ENCODE measurements at regions of chr16 and their contacts with region 1.

Region 1: GRCh38 chr16:11255737-11256660 is at the start of gene SOCS1:
- DNase-seq: peak; percentile 90
- H3K4me3 Mint-ChIP-seq: peak within 1 kb of the TSS; percentile 99
- H3K27ac Mint-ChIP-seq: peak within 1 kb of the TSS; percentile 97
- H3K4me1 Mint-ChIP-seq: peaks cover 38% of the 10 kb centered on the region
- H3K27me3 Mint-ChIP-seq: no peaks in the 10 kb centered on the region
- total RNA-seq, gene SOCS1: 217 and 219 TPM in 2 replicates

Region 2: DNA sequence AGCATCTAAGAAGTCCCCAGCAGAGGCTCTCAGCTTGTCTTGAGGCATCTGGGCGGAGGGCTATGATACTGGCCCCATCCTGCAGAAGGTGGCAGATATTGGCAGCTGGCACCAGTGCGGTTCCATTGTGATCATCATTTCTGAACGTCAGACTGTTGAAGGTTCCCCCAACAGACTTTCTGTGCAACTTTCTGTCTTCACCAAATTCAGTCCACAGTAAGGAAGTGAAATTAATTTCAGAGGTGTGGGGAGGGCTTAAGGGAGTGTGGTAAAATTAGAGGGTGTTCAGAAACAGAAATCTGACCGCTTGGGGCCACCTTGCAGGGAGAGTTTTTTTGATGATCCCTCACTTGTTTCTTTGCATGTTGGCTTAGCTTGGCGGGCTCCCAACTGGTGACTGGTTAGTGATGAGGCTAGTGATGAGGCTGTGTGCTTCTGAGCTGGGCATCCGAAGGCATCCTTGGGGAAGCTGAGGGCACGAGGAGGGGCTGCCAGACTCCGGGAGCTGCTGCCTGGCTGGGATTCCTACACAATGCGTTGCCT is 379.1 kb before region 1 on chr16 and contains the start of gene CIITA:
- intact Hi-C with region 1: loop called (anchors 10 kb)
- DNase-seq: peak; percentile 60
- H3K4me3 Mint-ChIP-seq: peak within 1 kb of the TSS; percentile 80
- H3K27ac Mint-ChIP-seq: peak within 1 kb of the TSS; percentile 75
- H3K4me1 Mint-ChIP-seq: peaks cover 75% of the 10 kb centered on the region
- H3K27me3 Mint-ChIP-seq: peaks cover 4% of the 10 kb centered on the region
- total RNA-seq, gene CIITA: 8.6 and 9.3 TPM in 2 replicates

Region 3: DNA sequence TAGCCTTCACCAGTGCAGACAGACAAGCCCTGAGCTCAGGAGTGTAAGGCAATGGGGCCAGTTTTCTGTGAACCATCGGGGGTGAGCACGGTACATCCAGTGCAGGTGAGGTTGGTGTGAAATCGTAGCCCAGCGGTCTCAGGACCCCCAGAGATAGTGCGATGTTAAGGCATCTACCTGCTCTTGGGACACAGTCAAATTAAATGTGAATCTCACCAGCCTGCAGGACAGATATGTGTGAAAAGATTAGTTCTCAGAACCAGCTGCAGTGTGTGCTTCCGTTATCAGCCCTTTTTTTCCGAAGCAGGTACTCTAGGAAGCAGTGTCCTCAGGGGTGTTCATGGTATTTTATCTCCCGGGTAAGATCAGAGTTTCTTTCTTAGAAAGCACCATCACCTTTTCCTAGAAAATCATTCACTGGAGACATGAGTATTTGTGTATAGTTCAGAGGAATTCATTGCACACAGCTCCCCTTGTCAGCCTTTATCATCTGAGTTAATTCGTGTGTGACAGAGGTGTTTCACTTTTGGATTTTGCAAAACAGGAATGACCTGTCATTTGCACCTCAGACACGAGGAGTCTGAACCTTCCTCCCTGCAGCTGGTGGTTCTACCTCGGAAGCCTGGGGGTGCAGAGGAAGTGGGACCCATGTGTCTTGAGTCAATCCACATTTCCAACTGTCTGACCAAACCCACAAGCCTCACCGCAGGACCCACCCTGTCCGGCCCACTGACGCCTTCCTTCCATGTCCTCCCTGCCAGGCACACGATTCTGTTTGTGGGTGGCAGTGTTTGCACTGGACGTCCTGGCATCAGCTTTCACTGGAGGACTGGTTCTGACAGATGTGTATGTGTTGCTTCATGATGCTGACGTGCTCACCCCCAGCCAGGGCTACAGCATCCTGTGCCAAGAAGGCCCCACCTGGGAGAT is 203.9 kb before region 1 on chr16:
- intact Hi-C with region 1: loop called (anchors 1 kb)
- DNase-seq: peak; percentile 83
- H3K4me3 Mint-ChIP-seq: peak overlapping the region; percentile 43
- H3K27ac Mint-ChIP-seq: peak overlapping the region; percentile 92
- H3K4me1 Mint-ChIP-seq: peaks cover 85% of the 10 kb centered on the region
- H3K27me3 Mint-ChIP-seq: no peaks in the 10 kb centered on the region

Region 4: DNA sequence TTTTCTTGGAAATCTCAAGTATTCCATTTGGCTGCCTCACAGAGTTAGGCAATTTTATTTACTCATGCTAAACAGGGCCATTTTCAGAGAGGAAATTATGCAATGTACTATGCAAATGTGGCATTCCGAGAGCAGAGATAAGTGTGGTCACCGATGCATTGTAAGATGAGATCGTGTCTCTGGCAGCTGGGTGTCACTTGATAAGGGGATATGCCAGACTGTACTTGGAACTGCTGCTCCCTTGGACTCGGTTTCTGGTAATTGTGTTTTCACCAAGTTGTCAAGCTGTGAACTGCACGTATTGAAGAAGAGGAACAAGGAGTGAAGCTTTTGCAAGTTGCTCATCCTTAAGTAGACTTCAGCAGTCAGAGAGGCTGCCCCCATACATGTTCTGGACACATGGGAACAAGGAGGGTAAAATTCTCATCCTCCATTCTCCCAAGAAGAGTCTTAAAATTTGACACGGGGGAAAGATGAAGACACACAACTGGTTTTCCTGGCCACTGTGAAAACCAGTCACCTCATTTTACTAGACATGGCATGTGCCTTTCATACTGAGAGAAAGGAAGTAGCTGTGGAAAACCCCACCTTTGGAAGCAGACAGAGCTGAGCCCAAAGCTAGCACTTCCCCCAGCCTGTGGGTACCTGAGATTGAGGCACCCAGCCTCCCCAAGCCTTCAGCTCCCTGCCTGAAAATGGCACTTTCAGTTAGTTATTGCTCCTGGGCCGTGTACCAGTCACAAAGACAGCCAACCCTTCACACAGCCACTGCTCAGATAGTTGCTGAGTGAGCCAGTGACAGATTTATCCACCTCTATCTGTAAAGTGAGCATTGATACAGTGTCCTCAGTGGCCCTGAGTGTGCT is 150.7 kb before region 1 on chr16:
- intact Hi-C with region 1: loop called (anchors 1 kb)
- DNase-seq: peak; percentile 51
- H3K4me3 Mint-ChIP-seq: peak overlapping the region; percentile 55
- H3K27ac Mint-ChIP-seq: peak overlapping the region; percentile 92
- H3K4me1 Mint-ChIP-seq: peaks cover 82% of the 10 kb centered on the region
- H3K27me3 Mint-ChIP-seq: no peaks in the 10 kb centered on the region

Region 5: DNA sequence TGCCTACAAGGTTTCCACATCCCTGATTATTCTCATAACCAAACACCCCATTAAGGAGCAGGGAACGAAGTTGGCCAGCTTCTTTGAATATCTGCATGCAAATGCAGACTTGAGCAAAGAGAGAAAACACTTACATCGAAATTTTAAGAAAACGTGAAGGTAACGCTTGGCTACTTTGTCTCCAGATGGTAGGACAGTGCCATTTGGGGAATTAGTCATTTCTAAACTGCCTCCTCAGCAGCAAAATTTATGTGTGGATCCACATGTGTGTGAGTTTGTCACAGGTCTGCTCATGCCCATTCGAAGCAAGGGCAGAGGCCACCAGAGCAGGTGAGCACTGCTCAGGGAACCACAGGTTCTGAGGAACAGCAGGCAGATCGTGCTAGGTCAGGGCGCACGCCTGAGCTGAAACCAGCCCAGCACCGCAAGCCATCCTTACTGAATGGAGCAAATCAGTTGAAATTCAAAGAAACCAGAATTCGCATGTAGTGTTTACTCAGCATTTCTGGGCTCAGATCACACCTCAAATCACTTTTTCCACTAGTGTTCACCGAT is 80.1 kb before region 1 on chr16:
- intact Hi-C with region 1: loop called (anchors 2 kb)
- DNase-seq: peak; percentile 35
- H3K4me3 Mint-ChIP-seq: no peak overlapping the region
- H3K27ac Mint-ChIP-seq: peak overlapping the region; percentile 83
- H3K4me1 Mint-ChIP-seq: peaks cover 79% of the 10 kb centered on the region
- H3K27me3 Mint-ChIP-seq: no peaks in the 10 kb centered on the region

Region 6: DNA sequence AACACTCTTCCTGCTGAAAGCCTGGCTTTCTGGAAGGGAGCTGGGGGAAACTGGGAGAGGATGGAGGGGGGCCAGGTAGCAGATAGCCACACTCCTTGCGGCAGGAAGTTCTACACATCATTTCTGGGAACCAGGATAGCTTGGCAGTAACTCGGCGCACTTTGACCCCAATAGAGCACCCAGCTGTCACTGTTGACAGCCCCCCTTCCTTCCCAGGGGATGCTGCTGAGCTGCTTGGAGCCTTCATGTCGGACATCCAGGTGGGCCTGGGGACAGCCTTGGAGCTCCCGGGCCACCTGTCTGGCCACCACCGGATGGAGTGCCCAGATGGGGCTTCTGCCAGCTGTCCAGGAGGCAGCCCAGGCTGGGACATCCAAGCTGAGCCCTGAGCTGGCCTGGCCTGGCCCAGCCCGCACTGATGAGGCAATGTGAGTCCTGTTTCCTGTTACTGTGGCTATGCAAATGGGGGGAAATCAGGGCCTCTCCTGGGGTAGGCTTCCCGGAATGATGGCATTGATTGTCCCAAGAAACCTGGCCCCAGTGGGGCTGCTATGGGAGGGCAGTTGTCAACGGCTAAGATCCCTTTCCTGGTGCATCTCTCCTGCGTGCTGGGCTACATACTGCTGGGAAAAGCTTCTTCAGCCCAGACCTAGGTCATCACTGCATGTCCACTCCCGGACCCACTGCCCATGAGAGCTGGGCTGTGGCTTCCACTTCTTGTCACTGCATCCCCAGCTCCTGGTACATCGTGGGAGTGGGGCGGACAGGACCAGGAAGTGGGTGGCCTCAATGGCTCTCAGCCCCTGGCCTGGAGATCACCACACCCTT is 50.0 kb before region 1 on chr16:
- intact Hi-C with region 1: no loop called
- DNase-seq: no peak
- H3K4me3 Mint-ChIP-seq: no peak overlapping the region
- H3K27ac Mint-ChIP-seq: peak overlapping the region; percentile 89
- H3K4me1 Mint-ChIP-seq: peaks cover 49% of the 10 kb centered on the region
- H3K27me3 Mint-ChIP-seq: no peaks in the 10 kb centered on the region

Region 7: GRCh38 chr16:11232852-11233726 is 22.9 kb before region 1 on chr16:
- intact Hi-C with region 1: loop called (anchors 1 kb)
- DNase-seq: peak; percentile 91
- H3K4me3 Mint-ChIP-seq: peak overlapping the region; percentile 56
- H3K27ac Mint-ChIP-seq: peak overlapping the region; percentile 98
- H3K4me1 Mint-ChIP-seq: peaks cover 76% of the 10 kb centered on the region
- H3K27me3 Mint-ChIP-seq: no peaks in the 10 kb centered on the region

Region 8: GRCh38 chr16:11356573-11357331 is 100.8 kb after region 1 on chr16:
- intact Hi-C with region 1: loop called (anchors 1 kb)
- DNase-seq: peak; percentile 33
- H3K4me3 Mint-ChIP-seq: no peak overlapping the region
- H3K27ac Mint-ChIP-seq: no peak overlapping the region
- H3K4me1 Mint-ChIP-seq: peaks cover 68% of the 10 kb centered on the region
- H3K27me3 Mint-ChIP-seq: no peaks in the 10 kb centered on the region

Region 9: DNA sequence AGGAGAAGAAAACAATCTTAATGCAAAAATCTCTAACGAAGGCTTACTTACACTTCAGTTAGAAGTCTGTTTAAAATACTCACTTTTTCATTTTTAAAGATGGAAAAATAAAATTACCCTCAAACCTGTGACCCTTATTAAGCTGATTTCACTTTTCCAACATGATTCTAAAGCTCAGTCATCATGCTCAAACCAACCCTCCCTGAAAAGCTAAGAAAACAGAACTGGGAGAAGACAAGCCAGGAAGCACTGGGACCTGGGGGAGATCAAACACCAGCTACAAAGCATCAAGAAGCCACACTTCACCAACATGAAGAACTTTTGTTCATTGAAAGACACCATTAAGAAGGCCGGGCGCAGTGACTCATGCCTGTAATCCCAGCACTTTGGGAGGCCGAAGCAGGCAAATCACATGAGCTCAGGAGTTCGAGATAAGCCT is 241.9 kb after region 1 on chr16:
- intact Hi-C with region 1: no loop called
- DNase-seq: no peak
- H3K4me3 Mint-ChIP-seq: no peak overlapping the region
- H3K27ac Mint-ChIP-seq: no peak overlapping the region
- H3K4me1 Mint-ChIP-seq: peaks cover 16% of the 10 kb centered on the region
- H3K27me3 Mint-ChIP-seq: no peaks in the 10 kb centered on the region